Aorta (tissue), 5 donors: ENCODE measurements at regions of chr17 and their contacts with region 1.

Region 1: GRCh38 chr17:56779898-56780733 is 53.6 kb downstream of the C17orf67 start:
- DNase-seq: peak; percentile 76 to 92
- ATAC-seq: peak; percentile 94
- H3K4me3 ChIP-seq: peak overlapping the region in 1 of 2 donors; percentile 63
- H3K27ac ChIP-seq: no peak overlapping the region
- H3K4me1 ChIP-seq: no peaks in the 10 kb centered on the region
- H3K27me3 ChIP-seq: no peaks in the 10 kb centered on the region

Region 2: GRCh38 chr17:56592487-56593085 is 187.5 kb before region 1 on chr17:
- intact Hi-C with region 1: loop called (anchors 5 kb)
- DNase-seq: peak; percentile 60 to 87
- ATAC-seq: peak; percentile 89
- H3K4me3 ChIP-seq: peak overlapping the region; percentile 0 to 55
- H3K27ac ChIP-seq: no peak overlapping the region
- H3K4me1 ChIP-seq: peaks cover 0 to 4% of the 10 kb centered on the region in 2 donors
- H3K27me3 ChIP-seq: no peaks in the 10 kb centered on the region

Region 3: DNA sequence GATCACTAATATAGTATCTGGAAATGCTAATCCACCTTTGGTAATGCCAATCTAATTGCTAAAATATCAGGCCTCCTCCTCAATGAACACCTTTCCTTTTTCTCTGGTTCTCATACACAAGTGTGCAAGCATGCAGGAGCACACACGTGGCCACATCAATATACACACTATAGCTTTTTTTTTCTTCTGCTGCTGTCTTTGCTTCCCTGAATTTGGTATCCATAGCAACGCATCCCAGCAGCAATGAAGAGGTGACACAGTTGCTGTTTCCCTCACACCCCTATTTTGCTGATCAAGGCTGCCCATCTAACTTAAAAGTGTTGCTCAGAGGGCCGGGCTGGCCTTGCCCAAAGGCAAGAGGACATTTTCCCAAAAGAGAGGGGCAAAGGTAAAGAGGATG is 171.2 kb before region 1 on chr17:
- intact Hi-C with region 1: no loop called
- DNase-seq: no peak
- ATAC-seq: no peak
- H3K4me3 ChIP-seq: no peak overlapping the region
- H3K27ac ChIP-seq: no peak overlapping the region
- H3K4me1 ChIP-seq: no peaks in the 10 kb centered on the region
- H3K27me3 ChIP-seq: no peaks in the 10 kb centered on the region

Region 4: DNA sequence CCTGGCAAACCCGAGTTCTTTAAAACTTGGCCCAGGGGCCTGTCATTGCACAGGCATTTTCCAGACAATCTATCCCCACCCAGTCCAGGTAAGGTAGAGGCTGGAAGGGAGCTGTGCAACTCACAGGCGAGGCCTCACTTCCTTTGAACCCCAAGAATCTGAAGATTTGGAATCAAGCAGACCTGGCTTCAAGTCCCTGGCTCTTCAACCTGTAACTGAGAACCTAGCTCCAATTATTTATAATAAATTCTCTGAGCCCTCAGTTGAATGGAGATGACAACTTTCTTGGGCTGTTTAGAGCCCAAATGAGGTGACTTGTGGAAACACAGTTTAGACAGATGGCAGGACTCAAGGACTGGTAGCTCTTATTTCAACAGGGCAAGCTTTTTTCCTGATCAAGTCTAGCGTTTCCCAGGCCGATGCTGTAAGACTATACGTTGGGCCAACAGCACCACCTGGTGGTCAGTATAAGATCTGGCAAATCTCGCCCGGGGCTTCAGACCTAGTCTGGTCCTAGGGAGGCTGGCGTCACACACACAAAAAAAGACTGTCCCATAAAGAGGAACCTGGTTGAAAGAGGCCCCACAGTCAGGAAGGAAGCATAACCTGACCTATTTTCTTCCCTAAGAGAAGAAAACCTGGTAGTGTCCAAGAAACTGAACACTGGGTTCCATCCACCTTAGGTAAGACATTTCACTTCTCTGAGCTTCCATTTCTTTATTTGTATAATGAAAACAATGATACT is 64.3 kb before region 1 on chr17:
- intact Hi-C with region 1: loop called in 1 of 2 experiments (anchors 5 kb)
- DNase-seq: peak; percentile 81 to 89
- ATAC-seq: peak; percentile 92
- H3K4me3 ChIP-seq: no peak overlapping the region
- H3K27ac ChIP-seq: no peak overlapping the region
- H3K4me1 ChIP-seq: no peaks in the 10 kb centered on the region
- H3K27me3 ChIP-seq: no peaks in the 10 kb centered on the region